ENCODE measurements at regions of chr17 and their contacts with region 1.

Region 1: DNA sequence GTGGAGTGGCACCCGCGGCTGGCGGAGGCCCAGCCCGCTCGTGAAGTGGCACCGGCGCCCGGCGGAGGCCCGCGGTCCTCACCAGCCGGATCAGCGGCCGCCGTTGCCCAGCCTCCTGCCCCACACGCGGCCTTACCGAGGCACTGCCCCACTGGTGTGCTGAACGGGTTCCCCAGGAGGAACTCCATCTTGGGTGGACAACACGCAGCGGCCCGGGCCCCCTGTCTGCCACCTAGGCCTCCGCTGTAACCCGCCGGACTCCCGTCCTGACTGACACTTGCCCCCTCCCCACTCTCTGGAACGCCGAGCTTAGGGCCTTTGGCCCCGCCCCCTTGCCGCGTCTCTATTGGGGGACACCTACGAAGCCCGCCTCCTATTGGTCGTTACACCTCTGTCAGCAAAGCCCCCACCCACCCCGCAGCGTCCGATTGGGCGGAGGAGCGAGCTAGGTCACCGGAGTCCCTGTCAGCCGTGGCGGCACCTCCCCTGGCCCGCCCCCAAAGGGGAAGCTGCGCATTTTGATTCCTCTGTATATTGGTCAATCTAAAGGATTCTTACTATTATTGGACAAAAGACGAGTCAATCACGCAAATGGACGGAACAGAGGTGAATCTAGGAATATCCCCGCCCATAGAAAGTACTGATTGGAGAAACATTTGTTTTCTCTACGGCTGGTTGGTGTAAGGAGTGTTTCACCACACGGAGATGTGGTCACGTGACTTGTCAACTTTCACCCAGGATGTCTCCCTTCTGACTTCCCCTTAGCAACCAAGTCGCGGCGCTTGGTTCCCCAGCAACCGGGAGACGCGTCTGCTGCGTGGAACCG is at the starts of genes DRC3 and TOM1L2:
- DNase-seq: peak; percentile 100
- ATAC-seq: peak; percentile 90
- H3K4me3 ChIP-seq: peak within 1 kb of the TSS; percentile 62 to 66
- H3K4me3 Mint-ChIP-seq: peak within 1 kb of the TSS; percentile 97
- H3K27ac ChIP-seq: peak within 1 kb of the TSS; percentile 77 to 85
- H3K27ac Mint-ChIP-seq: peak within 1 kb of the TSS; percentile 97
- H3K4me1 ChIP-seq: peaks cover 13% of the 10 kb centered on the region
- H3K4me1 Mint-ChIP-seq: peaks cover 39% of the 10 kb centered on the region
- H3K27me3 ChIP-seq: no peaks in the 10 kb centered on the region
- H3K27me3 Mint-ChIP-seq: no peaks in the 10 kb centered on the region
- CTCF ChIP-seq: no peak
- total RNA-seq, gene DRC3: 0.61 to 0.90 TPM
- total RNA-seq, gene TOM1L2: 15.4 to 20.9 TPM

Region 2: GRCh38 chr17:17591355-17592298 is 380.7 kb before region 1 on chr17 and contains the start of gene PEMT:
- CTCF ChIA-PET with region 1: no interaction called
- POLR2A ChIA-PET with region 1: no interaction called
- intact Hi-C with region 1: loop called (anchors 1 to 2 kb)
- DNase-seq: peak; percentile 81 to 98 (median 92)
- ATAC-seq: peak; percentile 90
- H3K4me3 ChIP-seq: peak within 1 kb of the TSS; percentile 72 to 88
- H3K4me3 Mint-ChIP-seq: peak within 1 kb of the TSS; percentile 94
- H3K27ac ChIP-seq: peak within 1 kb of the TSS; percentile 80 to 86
- H3K27ac Mint-ChIP-seq: peak within 1 kb of the TSS; percentile 95
- H3K4me1 ChIP-seq: peaks cover 20% of the 10 kb centered on the region
- H3K4me1 Mint-ChIP-seq: peaks cover 19% of the 10 kb centered on the region
- H3K27me3 ChIP-seq: no peaks in the 10 kb centered on the region
- H3K27me3 Mint-ChIP-seq: no peaks in the 10 kb centered on the region
- CTCF ChIP-seq: no peak
- total RNA-seq, gene PEMT: 14.7 to 15.4 TPM

Region 3: DNA sequence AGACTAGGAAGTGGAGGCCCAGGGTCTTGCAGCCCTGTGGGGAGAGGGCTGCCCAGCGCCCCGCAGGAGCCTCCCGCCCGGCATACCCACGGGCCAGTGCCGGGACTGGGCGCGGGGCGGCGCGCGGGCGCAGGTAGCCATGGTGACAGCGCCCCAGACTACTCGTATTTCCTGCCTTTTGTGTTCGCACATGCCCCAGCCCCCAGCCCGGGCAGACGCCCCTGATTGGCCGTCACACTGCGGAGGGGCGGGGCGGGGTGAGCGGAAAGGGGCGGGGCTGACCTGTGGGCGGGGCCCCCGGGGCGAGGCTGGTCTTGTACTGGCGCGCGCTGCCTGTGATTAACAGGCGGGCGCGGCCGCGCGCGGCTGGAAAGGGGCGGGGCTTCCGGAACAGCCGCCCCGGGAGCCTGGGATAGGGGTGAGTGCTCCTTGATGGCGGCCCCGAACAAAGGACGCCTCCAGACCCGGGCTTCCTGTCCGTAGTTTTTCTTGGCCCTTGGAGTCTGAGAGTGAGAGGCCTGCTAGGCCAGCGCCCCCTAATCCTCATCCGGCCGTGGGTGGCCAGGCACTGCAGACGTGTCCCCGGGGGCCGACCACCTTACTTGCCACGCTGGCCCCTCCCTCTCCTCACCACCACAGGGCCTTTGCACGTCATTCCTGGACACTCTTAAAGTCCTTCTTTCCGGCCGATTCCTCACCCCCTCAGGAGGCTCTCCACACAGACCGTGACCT is 220.1 kb before region 1 on chr17:
- CTCF ChIA-PET with region 1: no interaction called
- POLR2A ChIA-PET with region 1: no interaction called
- intact Hi-C with region 1: loop called in 1 of 2 experiments (anchors 1 kb)
- DNase-seq: peak; percentile 95 to 98 (median 97)
- ATAC-seq: peak; percentile 84
- H3K4me3 ChIP-seq: peak overlapping the region; percentile 68 to 75
- H3K4me3 Mint-ChIP-seq: peak overlapping the region; percentile 90
- H3K27ac ChIP-seq: peak overlapping the region; percentile 94 to 96
- H3K27ac Mint-ChIP-seq: peak overlapping the region; percentile 99
- H3K4me1 ChIP-seq: peaks cover 79% of the 10 kb centered on the region
- H3K4me1 Mint-ChIP-seq: peaks cover 82% of the 10 kb centered on the region
- H3K27me3 ChIP-seq: no peaks in the 10 kb centered on the region
- H3K27me3 Mint-ChIP-seq: no peaks in the 10 kb centered on the region
- CTCF ChIP-seq: no peak

Region 4: DNA sequence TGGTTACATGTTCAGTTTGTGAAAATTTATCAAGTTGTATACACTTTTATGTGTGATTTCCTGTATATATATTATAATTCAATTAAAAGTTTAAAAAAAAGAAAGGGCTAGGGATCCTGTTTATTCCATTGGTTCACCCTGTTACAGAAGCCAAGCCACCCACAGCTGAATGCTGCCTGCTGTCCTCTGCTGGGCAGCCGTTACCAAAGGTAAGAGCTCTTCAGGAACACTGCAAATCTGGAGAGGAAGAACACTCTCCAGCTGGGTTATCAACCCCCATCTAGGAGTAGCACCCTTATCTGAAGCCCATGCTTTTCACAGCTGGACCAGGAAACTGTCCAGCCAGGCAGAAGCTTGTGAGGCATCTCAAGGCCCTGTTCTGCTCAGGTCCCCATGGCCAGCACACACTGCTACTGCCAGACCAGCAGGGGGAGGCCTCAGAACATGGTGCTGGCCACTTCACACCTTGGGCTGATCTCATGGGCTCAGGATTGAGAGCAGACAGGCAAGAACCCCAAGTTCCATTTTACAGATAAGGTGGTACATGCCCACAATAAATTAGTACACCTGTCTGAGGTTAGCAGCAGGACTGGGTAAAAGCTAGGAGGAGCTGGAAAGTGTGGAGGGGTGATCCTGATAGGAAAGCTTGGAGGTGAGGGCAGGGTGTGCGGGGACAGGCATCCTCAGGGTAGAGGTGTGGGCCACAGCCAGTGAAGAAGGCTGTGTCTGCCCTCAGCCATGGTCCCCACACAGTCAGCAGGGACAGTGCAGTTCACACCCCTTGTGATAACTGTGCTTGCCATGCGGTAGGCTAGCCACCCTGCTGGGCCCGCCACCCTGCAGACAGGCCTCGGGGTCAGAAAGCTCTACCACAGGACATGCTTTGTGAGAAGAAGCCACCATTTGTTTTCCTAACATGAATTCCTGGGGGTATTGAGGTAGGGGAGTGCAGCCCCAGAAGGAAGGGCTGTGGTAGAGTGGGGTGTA is 81.3 kb before region 1 on chr17:
- CTCF ChIA-PET with region 1: interaction called, 4 read pairs
- POLR2A ChIA-PET with region 1: no interaction called
- intact Hi-C with region 1: loop called in 1 of 2 experiments (anchors 2 kb)
- DNase-seq: peak in 8 of 9 experiments; percentile 10 to 65 (median 42)
- ATAC-seq: peak; percentile 68
- H3K4me3 ChIP-seq: no peak overlapping the region
- H3K4me3 Mint-ChIP-seq: no peak overlapping the region
- H3K27ac ChIP-seq: no peak overlapping the region
- H3K27ac Mint-ChIP-seq: no peak overlapping the region
- H3K4me1 ChIP-seq: no peaks in the 10 kb centered on the region
- H3K4me1 Mint-ChIP-seq: peaks cover 16% of the 10 kb centered on the region
- H3K27me3 ChIP-seq: no peaks in the 10 kb centered on the region
- H3K27me3 Mint-ChIP-seq: no peaks in the 10 kb centered on the region
- CTCF ChIP-seq: peak; percentile 26

Region 5: DNA sequence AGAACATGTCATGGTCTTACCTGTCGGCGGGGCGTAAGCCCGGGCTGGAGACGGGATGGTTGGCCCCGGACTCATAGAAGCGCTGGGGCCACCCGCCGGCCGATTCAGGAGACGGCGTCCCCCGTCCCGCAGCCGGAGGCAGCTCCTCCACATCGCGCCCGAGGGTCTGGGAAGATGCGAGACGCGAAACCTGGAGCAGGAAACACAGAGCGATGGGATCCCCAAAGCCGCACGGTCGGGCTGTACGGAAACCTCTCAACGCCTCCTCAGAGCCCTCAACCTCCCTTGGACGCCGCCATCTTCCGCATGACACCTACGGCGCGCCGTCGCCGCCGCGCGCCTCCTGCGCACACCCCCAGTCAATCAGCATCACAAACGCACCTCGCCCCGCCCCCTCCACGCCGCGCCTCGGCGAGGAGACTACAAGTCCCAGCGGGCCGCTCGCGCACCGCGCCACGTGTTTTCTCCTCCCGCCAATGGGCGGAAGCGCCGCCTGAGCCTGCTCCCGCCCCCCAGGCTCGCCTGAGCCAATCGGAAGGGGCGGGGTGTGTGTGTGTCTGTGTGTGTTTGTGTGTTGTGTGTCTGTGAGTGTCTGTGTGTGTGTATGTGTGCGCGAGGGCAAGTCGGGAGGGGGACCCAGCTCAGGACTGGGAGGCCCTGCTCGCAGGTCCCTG is 66.7 kb after region 1 on chr17 and contains the starts of genes ATPAF2 and GID4:
- CTCF ChIA-PET with region 1: interaction called, 6 read pairs
- POLR2A ChIA-PET with region 1: no interaction called
- intact Hi-C with region 1: loop called (anchors 1 kb)
- DNase-seq: peak; percentile 99 to 100 (median 100)
- ATAC-seq: peak; percentile 90
- H3K4me3 ChIP-seq: peak within 1 kb of the TSS; percentile 85 to 92
- H3K4me3 Mint-ChIP-seq: peak within 1 kb of the TSS; percentile 92
- H3K27ac ChIP-seq: peak within 1 kb of the TSS; percentile 63 to 84
- H3K27ac Mint-ChIP-seq: peak within 1 kb of the TSS; percentile 91
- H3K4me1 ChIP-seq: peaks cover 34% of the 10 kb centered on the region
- H3K4me1 Mint-ChIP-seq: peaks cover 56% of the 10 kb centered on the region
- H3K27me3 ChIP-seq: no peaks in the 10 kb centered on the region
- H3K27me3 Mint-ChIP-seq: no peaks in the 10 kb centered on the region
- CTCF ChIP-seq: no peak
- total RNA-seq, gene ATPAF2: 16.8 to 24.5 TPM
- total RNA-seq, gene GID4: 2.7 to 5.0 TPM

Region 6: DNA sequence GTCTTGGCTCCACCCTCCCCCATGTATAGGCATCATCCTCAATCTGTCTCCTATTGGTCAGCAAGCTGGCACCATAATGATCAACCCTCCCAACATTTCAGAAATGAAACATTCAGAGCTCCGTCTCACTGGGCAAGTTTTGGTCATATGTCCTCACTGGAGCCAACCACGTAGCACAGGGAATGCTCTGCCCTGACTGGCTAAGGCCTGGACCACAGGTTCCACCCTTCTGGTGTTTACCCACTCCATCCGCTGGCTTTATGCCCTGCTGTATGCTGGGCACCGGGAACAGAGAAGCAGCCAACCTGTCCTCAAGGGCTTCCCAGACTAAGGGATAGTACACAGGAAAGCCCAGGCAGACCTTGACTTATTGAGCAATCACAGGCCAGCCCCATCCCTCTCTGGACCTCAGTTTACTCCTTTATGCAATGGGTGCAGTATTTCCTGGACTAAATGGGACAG is 156.7 kb after region 1 on chr17:
- CTCF ChIA-PET with region 1: no interaction called
- POLR2A ChIA-PET with region 1: no interaction called
- intact Hi-C with region 1: no loop called
- DNase-seq: no peak
- ATAC-seq: no peak
- H3K4me3 ChIP-seq: no peak overlapping the region
- H3K4me3 Mint-ChIP-seq: no peak overlapping the region
- H3K27ac ChIP-seq: no peak overlapping the region
- H3K27ac Mint-ChIP-seq: no peak overlapping the region
- H3K4me1 ChIP-seq: no peaks in the 10 kb centered on the region
- H3K4me1 Mint-ChIP-seq: no peaks in the 10 kb centered on the region
- H3K27me3 ChIP-seq: no peaks in the 10 kb centered on the region
- H3K27me3 Mint-ChIP-seq: no peaks in the 10 kb centered on the region
- CTCF ChIP-seq: no peak

Region 7: DNA sequence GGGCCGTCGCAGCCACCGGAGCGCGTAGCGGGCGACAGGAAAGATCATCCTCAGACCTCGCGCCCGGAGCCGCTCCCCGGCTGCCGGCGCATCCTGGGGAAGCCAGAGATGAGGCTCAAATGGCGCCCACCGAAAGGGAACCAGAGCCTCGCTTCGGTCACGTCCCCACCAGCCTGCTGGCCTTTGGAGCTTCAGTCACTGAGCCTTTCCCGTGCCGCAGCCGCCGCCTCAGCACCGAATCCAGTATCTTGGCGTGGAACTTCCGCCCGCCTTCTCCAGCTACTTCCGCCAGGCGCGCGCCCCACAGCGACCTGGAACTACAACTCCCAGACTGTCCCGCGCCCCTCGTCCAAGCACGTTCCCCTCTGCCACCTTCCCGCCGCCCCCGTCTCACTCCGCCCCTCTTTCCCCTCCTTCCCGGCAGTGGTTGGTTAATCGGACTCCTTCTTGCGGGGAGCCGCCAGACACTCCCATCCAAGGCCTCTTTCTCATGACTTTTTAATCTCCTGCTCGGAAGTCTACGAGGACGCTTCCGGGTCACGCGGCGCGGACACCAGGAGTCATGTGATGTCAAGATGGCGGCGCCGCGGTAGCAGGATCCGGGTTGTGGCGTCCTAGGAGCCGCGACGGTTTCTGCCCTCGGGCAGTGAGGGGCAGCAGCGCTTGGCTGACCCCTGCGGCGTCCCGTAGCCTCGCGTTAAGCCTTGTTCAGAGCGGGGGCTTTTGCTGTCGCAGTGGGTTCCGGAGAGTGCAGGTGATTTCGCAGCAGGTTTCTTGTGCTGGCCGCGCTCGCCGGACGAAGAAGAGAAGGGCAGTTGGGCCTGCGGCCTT is 342.6 kb after region 1 on chr17 and contains the starts of genes SMCR8 and TOP3A:
- CTCF ChIA-PET with region 1: no interaction called
- POLR2A ChIA-PET with region 1: no interaction called
- intact Hi-C with region 1: loop called in 1 of 2 experiments (anchors 1 kb)
- DNase-seq: peak; percentile 95 to 99 (median 97)
- ATAC-seq: peak; percentile 95
- H3K4me3 ChIP-seq: peak within 1 kb of the TSS; percentile 88 to 93
- H3K4me3 Mint-ChIP-seq: peak within 1 kb of the TSS; percentile 90
- H3K27ac ChIP-seq: peak within 1 kb of the TSS; percentile 98 to 99
- H3K27ac Mint-ChIP-seq: peak within 1 kb of the TSS; percentile 97
- H3K4me1 ChIP-seq: peaks cover 67% of the 10 kb centered on the region
- H3K4me1 Mint-ChIP-seq: peaks cover 76% of the 10 kb centered on the region
- H3K27me3 ChIP-seq: no peaks in the 10 kb centered on the region
- H3K27me3 Mint-ChIP-seq: no peaks in the 10 kb centered on the region
- CTCF ChIP-seq: no peak
- total RNA-seq, gene SMCR8: 51.9 to 53.1 TPM
- total RNA-seq, gene TOP3A: 28.8 to 30.9 TPM

Measured in CD8-positive, alpha-beta T cell (primary cell).